ENCODE measurements at regions of chr6 and their contacts with region 1.

Region 1: DNA sequence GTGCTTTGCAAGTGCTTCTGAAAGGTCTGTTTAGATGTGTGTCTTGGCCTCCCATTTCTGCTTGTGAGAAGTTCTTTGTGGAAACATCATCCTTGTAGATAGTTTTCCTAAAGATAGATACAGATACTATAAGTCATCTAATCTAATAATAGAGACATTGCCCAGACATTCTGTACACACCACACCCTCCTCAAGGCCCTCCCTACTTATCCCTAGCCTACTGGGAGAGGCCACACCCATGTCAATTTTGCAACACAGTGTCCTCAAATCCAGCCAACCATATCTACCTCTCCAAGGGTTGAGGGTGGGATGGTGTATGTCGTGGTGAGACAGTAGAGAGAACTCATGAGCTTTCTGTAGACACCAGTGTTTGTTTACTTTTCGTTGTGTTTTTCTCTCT is 6.2 kb downstream of the KDM1B start:
- DNase-seq: peak; percentile 21
- H3K4me3 Mint-ChIP-seq: no peak overlapping the region
- H3K27ac Mint-ChIP-seq: peak overlapping the region; percentile 57
- H3K4me1 Mint-ChIP-seq: peaks cover 11% of the 10 kb centered on the region
- H3K27me3 Mint-ChIP-seq: no peaks in the 10 kb centered on the region
- CTCF ChIP-seq: no peak

Region 2: GRCh38 chr6:18171871-18172270 is 10.4 kb after region 1 on chr6:
- CTCF ChIA-PET with region 1: interaction called, 3 read pairs
- POLR2A ChIA-PET with region 1: interaction called, 13 read pairs
- intact Hi-C with region 1: no loop called
- DNase-seq: no peak
- H3K4me3 Mint-ChIP-seq: no peak overlapping the region
- H3K27ac Mint-ChIP-seq: no peak overlapping the region
- H3K4me1 Mint-ChIP-seq: no peaks in the 10 kb centered on the region
- H3K27me3 Mint-ChIP-seq: no peaks in the 10 kb centered on the region
- CTCF ChIP-seq: no peak

Region 3: GRCh38 chr6:18883851-18884250 is 722.4 kb after region 1 on chr6:
- CTCF ChIA-PET with region 1: no interaction called
- POLR2A ChIA-PET with region 1: no interaction called
- intact Hi-C with region 1: no loop called
- DNase-seq: no peak
- H3K4me3 Mint-ChIP-seq: no peak overlapping the region
- H3K27ac Mint-ChIP-seq: no peak overlapping the region
- H3K4me1 Mint-ChIP-seq: no peaks in the 10 kb centered on the region
- H3K27me3 Mint-ChIP-seq: peaks cover 12% of the 10 kb centered on the region
- CTCF ChIP-seq: no peak